GM12878 (cell line): ENCODE measurements at regions of chr7 and their contacts with region 1.

Region 1: GRCh38 chr7:21427182-21427870 is 557 bp upstream of the SP4 start:
- DNase-seq: peak; percentile 92
- ATAC-seq: peak; percentile 87
- H3K4me3 ChIP-seq: peak overlapping the region; percentile 93
- H3K27ac ChIP-seq: peak overlapping the region; percentile 97
- H3K4me1 ChIP-seq: peaks cover 15% of the 10 kb centered on the region
- H3K27me3 ChIP-seq: no peaks in the 10 kb centered on the region
- CTCF ChIP-seq: peak in 2 of 3 experiments; percentile 3 to 15; a peak in 1 of 6 replicates
- EP300 ChIP-seq: 0 out of 4 replicates have a peak, but pooled peaks have one; percentile 0 to 34
- POLR2A ChIP-seq: peak; percentile 67
- RAD21 ChIP-seq: no peak

Region 2: GRCh38 chr7:21076054-21076453 is 351.3 kb before region 1 on chr7:
- CTCF ChIA-PET with region 1: no interaction called
- POLR2A ChIA-PET with region 1: no interaction called
- RAD21 ChIA-PET with region 1: no interaction called
- SMC1A ChIA-PET with region 1: no interaction called
- in situ Hi-C with region 1: no loop called
- intact Hi-C with region 1: no loop called
- DNase-seq: no peak
- ATAC-seq: no peak
- H3K4me3 ChIP-seq: no peak overlapping the region
- H3K27ac ChIP-seq: no peak overlapping the region
- H3K4me1 ChIP-seq: no peaks in the 10 kb centered on the region
- H3K27me3 ChIP-seq: no peaks in the 10 kb centered on the region
- CTCF ChIP-seq: no peak
- EP300 ChIP-seq: no peak
- POLR2A ChIP-seq: no peak
- RAD21 ChIP-seq: no peak

Region 3: DNA sequence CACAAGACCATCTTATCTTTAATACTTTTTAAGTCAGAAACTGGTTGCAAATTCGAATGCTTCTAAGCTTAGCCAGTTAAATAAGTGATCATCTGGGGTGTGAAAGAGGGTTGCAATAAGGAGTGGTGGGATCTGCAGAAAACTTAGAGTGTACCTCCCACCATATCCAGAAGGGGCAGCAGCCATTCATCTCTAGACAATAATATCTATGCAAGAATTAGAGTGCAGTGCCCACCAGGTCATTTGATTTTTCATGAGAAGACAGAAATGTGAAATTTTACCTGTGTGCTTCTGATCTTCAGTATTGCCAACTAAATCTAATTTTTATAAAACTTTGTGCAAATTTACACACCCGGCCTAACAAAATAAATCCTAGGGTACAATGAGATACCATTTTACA is 126.6 kb before region 1 on chr7:
- CTCF ChIA-PET with region 1: no interaction called
- POLR2A ChIA-PET with region 1: no interaction called
- RAD21 ChIA-PET with region 1: no interaction called
- SMC1A ChIA-PET with region 1: no interaction called
- in situ Hi-C with region 1: no loop called
- intact Hi-C with region 1: loop called (anchors 5 kb)
- DNase-seq: no peak
- ATAC-seq: peak; percentile 57; the same call in 2 of the 3 replicates
- H3K4me3 ChIP-seq: no peak overlapping the region
- H3K27ac ChIP-seq: no peak overlapping the region
- H3K4me1 ChIP-seq: no peaks in the 10 kb centered on the region
- H3K27me3 ChIP-seq: no peaks in the 10 kb centered on the region
- CTCF ChIP-seq: peak in 1 of 3 experiments; percentile 35; a peak in 1 of 6 replicates
- EP300 ChIP-seq: no peak
- POLR2A ChIP-seq: no peak
- RAD21 ChIP-seq: peak; percentile 39

Region 4: GRCh38 chr7:21365866-21366624 is 61.3 kb before region 1 on chr7:
- CTCF ChIA-PET with region 1: interaction called, 3 read pairs
- POLR2A ChIA-PET with region 1: interaction called, 10 read pairs
- RAD21 ChIA-PET with region 1: interaction called, 6 read pairs
- SMC1A ChIA-PET with region 1: interaction called, 4 read pairs
- in situ Hi-C with region 1: no loop called
- intact Hi-C with region 1: no loop called
- DNase-seq: no peak
- ATAC-seq: no peak
- H3K4me3 ChIP-seq: no peak overlapping the region
- H3K27ac ChIP-seq: no peak overlapping the region; the same call in 1 of the 2 replicates
- H3K4me1 ChIP-seq: peaks cover 21% of the 10 kb centered on the region
- H3K27me3 ChIP-seq: no peaks in the 10 kb centered on the region
- CTCF ChIP-seq: no peak
- EP300 ChIP-seq: no peak
- POLR2A ChIP-seq: no peak
- RAD21 ChIP-seq: no peak

Region 5: DNA sequence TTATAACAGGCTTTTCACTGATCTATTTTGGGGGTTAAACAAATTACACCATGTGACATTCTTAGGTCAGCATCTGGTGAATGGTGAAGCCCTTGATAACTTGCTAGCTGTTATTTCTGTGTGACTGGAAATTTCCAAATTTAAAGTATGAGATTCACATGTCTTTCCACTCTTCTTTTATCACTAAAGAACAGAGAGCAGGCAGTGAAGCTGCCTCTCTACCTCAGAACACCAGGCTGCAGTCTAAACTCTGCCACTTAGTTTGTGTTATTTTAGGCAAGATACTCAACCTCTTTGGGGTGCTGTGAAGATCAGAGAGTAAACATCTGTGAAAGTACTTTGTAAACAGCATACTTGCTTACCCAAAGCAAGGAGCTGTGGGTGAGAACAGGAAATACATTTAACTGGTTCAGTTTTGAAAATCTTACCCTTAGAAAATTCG is 14.9 kb before region 1 on chr7:
- CTCF ChIA-PET with region 1: interaction called, 8 read pairs
- POLR2A ChIA-PET with region 1: interaction called, 53 read pairs
- RAD21 ChIA-PET with region 1: interaction called, 12 read pairs
- SMC1A ChIA-PET with region 1: interaction called, 16 read pairs
- in situ Hi-C with region 1: no loop called
- intact Hi-C with region 1: no loop called
- DNase-seq: peak; percentile 43
- ATAC-seq: peak; percentile 79
- H3K4me3 ChIP-seq: no peak overlapping the region
- H3K27ac ChIP-seq: peak overlapping the region; percentile 70
- H3K4me1 ChIP-seq: peaks cover 11% of the 10 kb centered on the region
- H3K27me3 ChIP-seq: no peaks in the 10 kb centered on the region
- CTCF ChIP-seq: no peak
- EP300 ChIP-seq: no peak
- POLR2A ChIP-seq: no peak
- RAD21 ChIP-seq: 0 out of 2 replicates have a peak, but pooled peaks have one; percentile 1

Region 6: GRCh38 chr7:21448974-21449373 is 21.6 kb after region 1 on chr7:
- CTCF ChIA-PET with region 1: no interaction called
- POLR2A ChIA-PET with region 1: no interaction called
- RAD21 ChIA-PET with region 1: no interaction called
- SMC1A ChIA-PET with region 1: interaction called, 43 read pairs
- in situ Hi-C with region 1: no loop called
- intact Hi-C with region 1: no loop called
- DNase-seq: no peak
- ATAC-seq: no peak
- H3K4me3 ChIP-seq: no peak overlapping the region
- H3K27ac ChIP-seq: no peak overlapping the region
- H3K4me1 ChIP-seq: no peaks in the 10 kb centered on the region
- H3K27me3 ChIP-seq: no peaks in the 10 kb centered on the region
- CTCF ChIP-seq: no peak
- EP300 ChIP-seq: no peak
- POLR2A ChIP-seq: no peak
- RAD21 ChIP-seq: no peak